ENCODE measurements at regions of chr1 and their contacts with region 1.

Region 1: DNA sequence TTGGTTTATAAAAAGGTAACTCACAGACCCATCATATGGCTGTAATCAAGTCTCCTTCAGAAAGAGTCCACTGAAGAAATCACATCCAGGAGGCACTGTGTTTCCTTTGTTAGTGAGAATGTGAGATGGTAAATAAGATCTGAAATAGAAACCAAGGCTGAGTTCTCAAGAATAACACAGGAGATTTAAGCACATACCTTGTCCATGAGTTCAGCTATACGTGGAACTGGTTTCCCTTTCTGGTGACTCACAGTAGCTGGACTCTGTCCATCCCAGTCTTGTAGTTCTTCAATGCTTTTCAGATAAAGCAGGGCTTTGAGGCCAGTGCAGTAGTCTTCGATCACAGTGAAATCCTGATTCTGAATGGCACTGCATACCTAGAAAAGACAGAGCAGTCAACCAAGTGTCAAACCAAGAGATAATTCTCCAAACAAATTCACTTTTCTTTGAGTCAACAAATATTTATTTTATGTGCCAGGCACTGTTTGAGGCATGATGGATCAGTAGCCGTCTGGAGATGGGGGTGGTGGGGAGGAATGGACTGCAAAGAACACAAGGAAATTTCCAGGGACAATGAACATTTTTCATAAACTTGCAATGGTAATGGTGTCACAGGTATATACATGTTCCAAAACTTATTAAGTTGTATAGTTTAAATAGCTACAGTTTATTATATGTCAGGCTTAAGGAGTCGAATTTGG is 471.4 kb downstream of the PTBP2 start:
- DNase-seq: no peak
- ATAC-seq: no peak
- H3K4me3 Mint-ChIP-seq: no peak overlapping the region
- H3K27ac Mint-ChIP-seq: no peak overlapping the region
- H3K4me1 Mint-ChIP-seq: 0 out of 2 replicates have a peak, but pooled peaks cover 2% of the 10 kb centered on the region
- H3K27me3 Mint-ChIP-seq: no peaks in the 10 kb centered on the region
- CTCF ChIP-seq: no peak

Region 2: DNA sequence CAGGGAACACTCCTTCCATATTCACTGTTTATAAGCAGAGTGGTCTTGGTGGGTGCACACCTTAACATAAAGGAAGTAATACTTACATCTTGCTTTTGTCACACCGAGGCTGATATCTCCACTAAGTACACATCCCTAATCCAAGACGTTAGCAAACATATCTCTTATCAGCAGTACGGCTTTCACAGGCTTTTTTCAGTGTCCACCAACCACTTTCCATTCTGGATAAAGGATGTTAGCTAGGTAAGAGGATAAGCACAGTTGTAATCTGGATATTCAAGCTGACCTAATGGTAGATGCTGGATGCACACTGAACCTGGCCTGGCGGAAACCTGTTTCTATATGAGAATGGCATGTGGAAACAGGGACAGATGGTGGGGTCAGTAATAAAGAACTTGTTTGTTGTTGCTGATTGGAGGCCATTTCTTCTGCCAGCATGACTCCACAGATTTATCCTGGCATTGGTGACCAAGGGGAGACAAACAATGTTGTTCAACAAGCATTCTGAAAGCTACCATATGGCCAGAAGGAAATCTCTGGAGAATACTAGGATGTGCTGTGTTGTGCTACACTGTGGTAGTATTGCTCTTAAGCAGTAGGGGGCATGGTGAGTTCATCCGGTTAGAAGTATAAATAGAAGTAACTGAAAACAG is 55.0 kb before region 1 on chr1:
- CTCF ChIA-PET with region 1: interaction called, 10 read pairs
- POLR2A ChIA-PET with region 1: no interaction called
- DNase-seq: no peak
- ATAC-seq: peak; percentile 98
- H3K4me3 Mint-ChIP-seq: no peak overlapping the region
- H3K27ac Mint-ChIP-seq: no peak overlapping the region
- H3K4me1 Mint-ChIP-seq: peaks cover 12% of the 10 kb centered on the region
- H3K27me3 Mint-ChIP-seq: no peaks in the 10 kb centered on the region
- CTCF ChIP-seq: peak; percentile 44; the same call in 1 of the 2 replicates

Region 3: DNA sequence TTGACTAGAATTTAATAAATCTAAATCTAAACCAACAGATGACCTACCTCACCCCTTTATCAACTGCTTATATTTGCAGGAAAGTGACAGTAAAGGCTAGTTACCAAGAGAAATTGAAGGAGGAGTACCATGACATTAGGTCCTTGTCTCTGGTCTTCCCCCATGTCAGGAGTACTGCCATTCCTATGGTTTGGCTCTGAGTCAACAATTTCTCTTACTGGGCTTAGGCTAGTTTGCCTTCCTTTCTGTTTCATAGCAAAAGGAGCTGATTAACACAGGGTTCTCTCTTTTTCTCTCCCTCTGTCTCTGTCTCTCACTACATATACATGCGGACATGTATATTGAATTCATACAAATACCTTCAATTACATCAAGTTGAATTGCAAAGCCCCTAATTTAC is 147.9 kb after region 1 on chr1:
- CTCF ChIA-PET with region 1: no interaction called
- POLR2A ChIA-PET with region 1: no interaction called
- DNase-seq: no peak
- ATAC-seq: no peak
- H3K4me3 Mint-ChIP-seq: no peak overlapping the region
- H3K27ac Mint-ChIP-seq: no peak overlapping the region
- H3K4me1 Mint-ChIP-seq: no peaks in the 10 kb centered on the region
- H3K27me3 Mint-ChIP-seq: no peaks in the 10 kb centered on the region
- CTCF ChIP-seq: no peak

Region 4: DNA sequence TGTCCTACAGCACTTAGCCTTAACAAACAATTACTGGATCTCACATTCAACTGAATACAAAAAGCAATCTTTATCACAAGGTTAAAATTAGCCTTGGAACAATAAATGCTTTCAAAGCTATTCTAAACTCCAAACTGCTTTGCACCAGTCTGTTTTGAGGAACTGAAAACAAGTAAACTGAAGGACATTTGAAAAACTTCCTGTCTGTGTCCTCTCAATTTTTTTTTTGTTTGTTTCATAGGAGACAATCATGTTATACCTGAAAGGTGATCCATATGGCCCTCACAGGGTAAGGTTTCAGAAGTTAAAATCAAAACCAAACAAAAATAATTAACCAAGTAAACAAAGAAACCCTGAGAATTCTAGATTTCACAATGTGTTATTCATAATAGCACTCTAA is 268.8 kb after region 1 on chr1:
- CTCF ChIA-PET with region 1: no interaction called
- POLR2A ChIA-PET with region 1: no interaction called
- DNase-seq: no peak
- ATAC-seq: no peak
- H3K4me3 Mint-ChIP-seq: no peak overlapping the region
- H3K27ac Mint-ChIP-seq: no peak overlapping the region
- H3K4me1 Mint-ChIP-seq: peaks cover 6% of the 10 kb centered on the region; the same call in 1 of the 2 replicates
- H3K27me3 Mint-ChIP-seq: no peaks in the 10 kb centered on the region
- CTCF ChIP-seq: no peak